ENCODE measurements at regions of chr14 and their contacts with region 1.

Region 1: GRCh38 chr14:98931911-98932310 is 340.1 kb downstream of the BCL11B start:
- DNase-seq: peak; percentile 68
- H3K4me3 Mint-ChIP-seq: peak overlapping the region; percentile 43
- H3K27ac Mint-ChIP-seq: peak overlapping the region; percentile 62
- H3K4me1 Mint-ChIP-seq: peaks cover 48% of the 10 kb centered on the region
- H3K27me3 Mint-ChIP-seq: no peaks in the 10 kb centered on the region

Region 2: DNA sequence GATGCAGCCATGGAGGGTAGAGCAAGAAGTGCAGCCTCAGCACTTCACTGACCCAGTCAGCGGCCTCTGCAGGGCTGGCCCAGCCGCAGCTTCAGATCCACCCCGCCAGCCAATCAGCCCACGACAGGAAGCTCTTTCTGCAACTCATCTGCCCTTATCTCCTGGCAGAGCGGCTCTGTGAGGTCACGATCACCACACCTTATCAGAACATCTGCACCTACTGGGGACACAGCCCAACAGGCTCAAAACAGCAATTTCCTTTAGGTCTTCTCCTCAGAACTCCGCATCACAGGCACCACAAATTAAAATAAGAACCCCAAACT is 52.8 kb after region 1 on chr14:
- intact Hi-C with region 1: loop called (anchors 10 kb)
- DNase-seq: peak; percentile 82
- H3K4me3 Mint-ChIP-seq: no peak overlapping the region
- H3K27ac Mint-ChIP-seq: peak overlapping the region; percentile 89
- H3K4me1 Mint-ChIP-seq: peaks cover 46% of the 10 kb centered on the region
- H3K27me3 Mint-ChIP-seq: no peaks in the 10 kb centered on the region

Measured in activated T-helper 2 cell treated with anti-CD3 and anti-CD28 coated beads, Interferon-gamma antibody, Interleukin-2, Interleukin-4, amounts not matched to agents 10 μg/mL and 5 μg/mL and 100 μg/mL, durations not matched to agents 14 hours and 24 hours and 36 hours (primary cell).